Naive thymus-derived CD8-positive, alpha-beta T cell (primary cell): ENCODE measurements at regions of chr10 and their contacts with region 1.

Region 1: GRCh38 chr10:102713814-102714620 is at the start of gene ARL3:
- DNase-seq: peak; percentile 83 to 97 (median 91)
- ATAC-seq: peak; percentile 88 to 90
- H3K4me3 Mint-ChIP-seq: peak within 1 kb of the TSS; percentile 88 to 97 (median 92)
- H3K27ac Mint-ChIP-seq: peak within 1 kb of the TSS; percentile 44 to 96 (median 91)
- H3K4me1 Mint-ChIP-seq: peaks cover 24 to 57% (median 47%) of the 10 kb centered on the region in 4 donors
- H3K27me3 Mint-ChIP-seq: no peaks in the 10 kb centered on the region
- polyA plus RNA-seq, gene ARL3: 3.7 to 4.4 (median 3.9) TPM

Region 2: DNA sequence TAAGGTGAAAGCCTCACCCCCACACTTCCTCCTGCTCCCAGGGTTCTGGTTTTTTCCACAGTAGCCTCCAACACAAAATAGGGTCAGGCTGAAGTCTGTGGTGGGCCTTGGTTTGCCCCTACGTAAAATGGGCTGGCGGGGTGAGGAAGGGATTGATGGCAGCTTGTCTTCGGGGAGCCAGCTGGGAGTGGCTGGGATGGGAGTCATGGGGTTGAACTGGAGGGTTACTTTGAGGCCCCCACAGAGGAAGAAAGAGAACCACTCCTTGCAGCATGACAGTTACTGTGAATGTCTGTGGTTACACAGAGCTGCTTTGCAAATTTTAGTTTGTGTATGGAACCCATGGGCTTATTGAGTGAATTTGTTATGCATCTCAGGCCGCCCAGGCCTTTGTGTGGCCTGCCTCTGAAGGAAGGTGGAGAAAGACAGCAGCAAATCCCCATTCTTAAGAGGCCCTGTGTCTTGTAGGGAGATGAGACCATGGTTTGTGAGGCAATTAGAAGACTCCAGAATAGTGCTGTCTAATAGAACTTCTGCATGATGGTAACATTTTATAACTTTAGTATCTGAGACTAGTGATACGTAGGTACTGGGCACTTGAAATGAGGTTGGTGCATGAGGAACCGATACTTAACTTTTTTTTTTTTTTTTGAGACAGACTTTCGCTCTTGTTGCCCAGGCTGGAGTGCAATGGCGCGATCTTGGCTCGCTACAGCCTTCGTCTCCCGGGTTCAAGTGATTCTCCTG is 61.7 kb before region 1 on chr10:
- POLR2A ChIA-PET with region 1: interaction called, 89 read pairs
- DNase-seq: peak in 3 of 10 donors; percentile 33 to 40 (median 37)
- ATAC-seq: peak; percentile 40 to 48
- H3K4me3 Mint-ChIP-seq: peak overlapping the region; percentile 57 to 98 (median 86)
- H3K27ac Mint-ChIP-seq: peak overlapping the region; percentile 92 to 98 (median 96)
- H3K4me1 Mint-ChIP-seq: peaks cover 52 to 84% (median 82%) of the 10 kb centered on the region in 4 donors
- H3K27me3 Mint-ChIP-seq: no peaks in the 10 kb centered on the region

Region 3: GRCh38 chr10:102673819-102674511 is 40.1 kb before region 1 on chr10:
- POLR2A ChIA-PET with region 1: interaction called, 24 read pairs
- DNase-seq: peak; percentile 50 to 92 (median 85)
- ATAC-seq: peak; percentile 87 to 95
- H3K4me3 Mint-ChIP-seq: peak overlapping the region; percentile 75 to 91 (median 87)
- H3K27ac Mint-ChIP-seq: peak overlapping the region; percentile 90 to 98 (median 96)
- H3K4me1 Mint-ChIP-seq: peaks cover 23 to 83% (median 62%) of the 10 kb centered on the region in 4 donors
- H3K27me3 Mint-ChIP-seq: no peaks in the 10 kb centered on the region

Region 4: GRCh38 chr10:102743588-102744373 is 29.8 kb after region 1 on chr10 and contains the start of gene WBP1L:
- POLR2A ChIA-PET with region 1: interaction called, 25 read pairs
- DNase-seq: peak; percentile 79 to 98 (median 95)
- ATAC-seq: peak; percentile 96 to 98
- H3K4me3 Mint-ChIP-seq: peak within 1 kb of the TSS; percentile 83 to 99 (median 94)
- H3K27ac Mint-ChIP-seq: peak within 1 kb of the TSS; percentile 87 to 97 (median 95)
- H3K4me1 Mint-ChIP-seq: peaks cover 35 to 57% (median 51%) of the 10 kb centered on the region in 4 donors
- H3K27me3 Mint-ChIP-seq: no peaks in the 10 kb centered on the region
- polyA plus RNA-seq, gene WBP1L: 22.6 to 28.2 (median 24.1) TPM

Region 5: DNA sequence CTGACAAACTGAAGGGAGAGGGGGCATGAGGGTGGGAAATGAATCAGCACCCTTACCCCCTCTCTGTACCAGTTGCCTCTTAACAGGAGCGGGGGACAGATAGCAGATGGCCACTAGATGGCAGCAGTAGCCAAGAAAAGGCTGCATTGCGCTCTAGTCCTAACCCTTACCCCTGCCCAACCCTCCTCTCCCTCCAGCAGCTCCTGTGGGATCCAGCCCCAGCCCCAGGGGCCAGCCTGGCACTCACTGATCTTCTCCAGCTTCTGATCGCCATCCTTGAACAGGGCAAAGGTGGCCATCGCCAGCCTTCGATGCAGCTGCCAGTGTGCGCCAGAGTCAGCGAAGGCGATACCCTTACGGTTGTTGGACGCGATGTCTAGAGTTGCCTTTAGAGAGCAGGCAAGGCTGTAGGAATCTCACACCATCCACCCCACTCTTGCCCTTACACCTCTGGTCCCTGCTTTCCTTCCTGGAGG is 121.0 kb after region 1 on chr10:
- POLR2A ChIA-PET with region 1: no interaction called
- DNase-seq: peak; percentile 49 to 85 (median 70)
- ATAC-seq: peak; percentile 86 to 99
- H3K4me3 Mint-ChIP-seq: no peak overlapping the region
- H3K27ac Mint-ChIP-seq: no peak overlapping the region
- H3K4me1 Mint-ChIP-seq: peaks cover 0 to 7% (median under 1%) of the 10 kb centered on the region in 4 donors
- H3K27me3 Mint-ChIP-seq: peaks cover 2 to 10% (median 6%) of the 10 kb centered on the region in 5 donors

Region 6: GRCh38 chr10:102853944-102854694 is 140.1 kb after region 1 on chr10 and contains the start of gene BORCS7:
- POLR2A ChIA-PET with region 1: no interaction called
- DNase-seq: peak; percentile 59 to 93 (median 84)
- ATAC-seq: peak; percentile 99
- H3K4me3 Mint-ChIP-seq: peak within 1 kb of the TSS; percentile 81 to 99 (median 92)
- H3K27ac Mint-ChIP-seq: peak within 1 kb of the TSS; percentile 97 to 99 (median 99)
- H3K4me1 Mint-ChIP-seq: peaks cover 6 to 25% (median 21%) of the 10 kb centered on the region in 4 donors
- H3K27me3 Mint-ChIP-seq: no peaks in the 10 kb centered on the region
- polyA plus RNA-seq, gene BORCS7: 34.8 to 61.7 (median 58.6) TPM